ENCODE measurements at regions of chr1 and their contacts with region 1.

Region 1: GRCh38 chr1:203166566-203166940 is 9.1 kb downstream of the MYBPH start:
- DNase-seq: no peak
- H3K4me3 ChIP-seq: no peak overlapping the region
- H3K27ac ChIP-seq: no peak overlapping the region
- H3K4me1 ChIP-seq: no peaks in the 10 kb centered on the region
- H3K27me3 ChIP-seq: peaks cover 3% of the 10 kb centered on the region
- CTCF ChIP-seq: no peak

Region 2: DNA sequence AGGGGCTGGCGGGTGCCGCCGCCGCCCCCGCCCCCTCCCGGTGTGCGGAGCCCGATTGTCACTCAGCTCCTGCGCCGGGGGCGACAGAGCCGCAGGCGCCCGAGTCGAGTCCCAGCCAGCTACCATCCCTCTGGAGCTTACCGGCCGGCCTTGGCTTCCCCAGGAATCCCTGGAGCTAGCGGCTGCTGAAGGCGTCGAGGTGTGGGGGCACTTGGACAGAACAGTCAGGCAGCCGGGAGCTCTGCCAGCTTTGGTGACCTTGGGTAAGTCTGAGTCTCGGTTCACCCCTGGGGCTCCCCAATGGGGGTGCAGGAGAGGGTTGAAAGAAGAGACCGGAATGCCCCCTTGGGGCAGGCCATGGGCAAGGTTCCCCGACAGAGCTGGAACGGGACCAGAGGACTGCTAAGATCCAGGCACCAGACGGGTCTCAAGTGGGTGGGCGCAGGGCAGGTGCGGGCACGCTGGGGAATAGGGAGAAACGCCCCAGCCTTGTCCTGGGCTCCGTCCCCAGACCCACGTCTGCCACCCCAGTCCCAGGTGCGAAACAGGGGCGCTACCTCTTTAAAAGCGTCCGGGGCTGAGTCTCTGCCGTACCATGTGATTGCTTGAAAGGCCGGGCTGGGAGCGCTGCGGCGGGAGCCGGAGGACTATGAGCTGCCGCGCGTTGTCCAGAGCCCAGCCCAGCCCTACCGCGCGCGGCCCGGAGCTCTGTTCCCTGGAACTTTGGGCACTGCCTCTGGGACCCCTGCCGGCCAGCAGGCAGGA is 38.7 kb before region 1 on chr1 and contains the start of gene ADORA1:
- CTCF ChIA-PET with region 1: interaction called, 4 read pairs
- dilution Hi-C with region 1: loop called (anchors 5 kb)
- in situ Hi-C with region 1: no loop called
- intact Hi-C with region 1: no loop called
- DNase-seq: peak; percentile 47
- H3K4me3 ChIP-seq: peak within 1 kb of the TSS; percentile 32 to 58 (median 41)
- H3K27ac ChIP-seq: no peak within 1 kb of the TSS
- H3K4me1 ChIP-seq: peaks cover 13% of the 10 kb centered on the region
- H3K27me3 ChIP-seq: no peaks in the 10 kb centered on the region
- CTCF ChIP-seq: peak in 1 of 2 donors; percentile 11
- total RNA-seq, gene ADORA1: 0.96 to 1.7 TPM

Region 3: DNA sequence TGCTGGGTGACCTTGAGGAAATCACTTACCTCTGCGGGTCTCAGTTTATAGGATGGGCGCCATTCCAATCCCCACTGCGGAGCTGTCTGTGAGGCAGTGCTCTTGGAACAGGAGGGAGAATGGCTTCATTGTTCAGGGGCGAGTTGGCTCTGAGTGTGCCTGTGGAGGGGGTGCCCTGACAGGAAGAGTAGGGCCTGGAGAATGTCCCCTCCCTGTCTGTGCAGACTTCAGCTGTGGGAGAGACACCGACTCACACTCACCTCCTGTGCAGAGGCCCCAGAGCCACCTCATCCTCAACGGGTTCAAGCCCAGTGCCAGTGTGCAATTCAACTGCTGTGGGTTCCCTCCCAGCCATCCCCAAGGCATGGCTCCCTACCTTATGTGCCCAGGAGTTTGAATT is 21.9 kb before region 1 on chr1:
- CTCF ChIA-PET with region 1: no interaction called
- dilution Hi-C with region 1: no loop called
- in situ Hi-C with region 1: no loop called
- intact Hi-C with region 1: no loop called
- DNase-seq: peak; percentile 48
- H3K4me3 ChIP-seq: no peak overlapping the region
- H3K27ac ChIP-seq: no peak overlapping the region
- H3K4me1 ChIP-seq: peaks cover 7% of the 10 kb centered on the region
- H3K27me3 ChIP-seq: no peaks in the 10 kb centered on the region
- CTCF ChIP-seq: no peak

Region 4: GRCh38 chr1:203229471-203230135 is 63.0 kb after region 1 on chr1 and contains the start of gene CHIT1:
- CTCF ChIA-PET with region 1: no interaction called
- dilution Hi-C with region 1: loop called (anchors 5 kb)
- in situ Hi-C with region 1: no loop called
- intact Hi-C with region 1: no loop called
- DNase-seq: no peak
- H3K4me3 ChIP-seq: no peak within 1 kb of the TSS
- H3K27ac ChIP-seq: no peak within 1 kb of the TSS
- H3K4me1 ChIP-seq: no peaks in the 10 kb centered on the region
- H3K27me3 ChIP-seq: no peaks in the 10 kb centered on the region
- CTCF ChIP-seq: no peak
- total RNA-seq, gene CHIT1: under 0.01 TPM in 1 of 2 donors, not detected in the other

Measured in mammary epithelial cell (primary cell).